A673 (cell line): ENCODE measurements at regions of chr19 and their contacts with region 1.

Region 1: DNA sequence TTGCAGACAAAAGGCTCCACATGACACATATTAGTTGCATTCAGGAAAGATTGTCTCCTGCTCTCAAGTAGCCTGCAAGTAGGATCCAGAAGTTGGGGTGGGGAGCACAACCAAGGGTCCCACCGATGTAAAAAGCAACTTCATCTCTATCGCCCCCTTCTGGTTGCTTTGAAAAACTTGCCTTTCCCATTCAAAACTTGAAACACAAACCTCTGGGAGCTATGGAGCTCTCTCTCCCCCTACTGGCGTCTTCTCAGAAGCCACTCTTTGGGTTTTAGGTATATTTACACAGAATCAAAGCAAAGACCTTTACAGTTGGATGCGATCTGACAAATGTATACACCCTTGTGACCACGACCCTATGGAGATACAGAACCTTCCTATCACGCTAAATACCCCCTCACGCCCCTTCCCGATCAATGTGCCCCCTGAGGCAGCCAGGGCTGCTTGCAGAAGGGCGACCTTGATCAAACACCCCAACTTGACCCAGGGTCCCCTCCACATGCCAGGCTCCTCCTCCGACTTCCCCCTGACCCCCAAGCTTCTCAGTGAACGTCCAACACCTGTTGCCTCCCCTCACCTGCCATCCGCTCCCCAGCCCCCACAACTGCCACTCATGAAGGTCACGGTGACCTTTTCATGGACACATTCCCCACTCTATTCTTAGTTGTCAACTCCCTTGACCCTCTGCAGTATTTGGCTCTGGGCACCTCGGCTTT is 10.1 kb downstream of the NOSIP start:
- DNase-seq: peak; percentile 94
- H3K4me3 ChIP-seq: peak overlapping the region; percentile 2
- H3K27ac ChIP-seq: peak overlapping the region; percentile 72
- H3K4me1 ChIP-seq: peaks cover 25% of the 10 kb centered on the region
- H3K27me3 ChIP-seq: no peaks in the 10 kb centered on the region
- CTCF ChIP-seq: peak; percentile 98

Region 2: DNA sequence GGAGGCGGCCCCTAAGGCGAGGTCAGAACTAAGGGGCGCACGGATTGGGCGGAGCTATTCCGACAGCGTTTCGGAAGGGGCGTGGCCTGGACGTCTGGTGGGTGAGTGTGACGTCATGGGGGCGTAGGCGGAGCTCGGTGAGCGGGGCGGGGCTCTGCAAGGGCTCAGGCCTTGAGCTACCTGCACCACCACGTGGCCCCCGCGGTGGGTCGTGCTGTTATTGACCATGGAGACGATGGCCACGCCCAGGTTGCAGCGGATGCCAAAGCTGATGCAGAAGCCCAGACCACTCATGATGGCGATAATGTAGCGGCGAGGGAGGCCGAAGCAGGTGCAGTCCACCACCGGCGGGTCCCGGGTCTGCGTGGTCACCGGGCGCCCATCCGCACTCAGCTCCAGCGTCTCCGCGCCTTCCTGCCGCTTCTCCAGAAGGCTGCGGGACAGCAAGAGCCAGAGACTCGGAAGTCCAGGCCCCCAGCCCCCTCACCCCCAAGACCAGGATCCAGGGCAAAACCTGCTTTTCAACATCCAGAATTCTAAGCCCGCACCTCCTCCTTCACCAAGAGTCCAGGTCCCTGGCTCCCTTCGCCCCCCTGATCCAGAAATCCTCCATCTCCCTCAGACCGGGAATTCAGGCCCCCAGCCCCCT is 133.8 kb before region 1 on chr19:
- CTCF ChIA-PET with region 1: no interaction called
- POLR2A ChIA-PET with region 1: no interaction called
- intact Hi-C with region 1: no loop called
- DNase-seq: no peak
- H3K4me3 ChIP-seq: no peak overlapping the region
- H3K27ac ChIP-seq: no peak overlapping the region
- H3K4me1 ChIP-seq: peaks cover 1% of the 10 kb centered on the region
- H3K27me3 ChIP-seq: peaks cover 36% of the 10 kb centered on the region
- CTCF ChIP-seq: no peak

Region 3: GRCh38 chr19:49502866-49503581 is 67.3 kb before region 1 on chr19:
- CTCF ChIA-PET with region 1: interaction called, 12 read pairs
- POLR2A ChIA-PET with region 1: no interaction called
- intact Hi-C with region 1: loop called (anchors 2 kb)
- DNase-seq: peak; percentile 90
- H3K4me3 ChIP-seq: no peak overlapping the region
- H3K27ac ChIP-seq: peak overlapping the region; percentile 18
- H3K4me1 ChIP-seq: peaks cover 44% of the 10 kb centered on the region
- H3K27me3 ChIP-seq: no peaks in the 10 kb centered on the region
- CTCF ChIP-seq: peak; percentile 71

Region 4: DNA sequence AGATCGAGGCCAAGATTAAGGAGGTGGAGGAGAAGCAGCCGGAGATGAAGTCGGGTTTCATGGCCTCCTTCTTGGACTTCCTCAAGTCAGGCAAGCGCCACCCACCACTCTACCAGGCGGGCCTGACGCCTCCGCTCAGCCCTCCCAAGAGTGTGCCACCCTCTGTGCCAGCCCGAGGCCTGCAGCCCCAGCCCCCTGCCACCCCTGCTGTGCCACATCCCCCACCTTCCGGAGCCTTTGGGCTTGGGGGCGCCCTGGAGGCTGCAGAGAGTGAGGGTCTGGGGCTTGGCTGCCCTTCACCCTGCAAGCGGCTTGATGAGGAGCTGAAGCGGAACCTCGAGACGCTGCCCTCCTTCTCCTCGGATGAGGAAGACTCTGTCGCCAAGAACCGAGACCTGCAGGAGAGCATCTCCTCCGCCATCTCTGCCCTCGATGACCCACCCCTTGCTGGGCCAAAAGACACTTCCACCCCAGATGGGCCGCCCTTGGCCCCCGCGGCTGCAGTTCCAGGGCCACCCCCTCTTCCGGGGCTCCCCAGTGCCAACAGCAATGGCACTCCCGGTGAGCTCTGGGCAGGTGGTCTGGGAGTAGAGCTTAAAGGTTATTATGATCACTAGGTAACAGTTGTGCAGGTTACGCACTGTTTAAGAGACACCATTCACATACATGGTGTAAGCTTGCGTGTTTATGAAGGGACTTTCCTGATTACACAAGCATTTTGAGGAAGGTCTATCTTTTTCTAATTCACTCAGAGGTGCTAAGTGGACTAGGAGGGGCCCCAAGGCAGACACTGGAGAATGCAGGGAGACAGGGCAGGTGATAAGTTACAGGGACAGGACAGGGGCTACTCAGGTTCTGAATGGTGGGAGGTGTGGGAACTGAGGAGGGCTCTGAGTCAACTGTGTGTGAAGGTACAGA is 29.3 kb after region 1 on chr19:
- CTCF ChIA-PET with region 1: no interaction called
- POLR2A ChIA-PET with region 1: no interaction called
- intact Hi-C with region 1: no loop called
- DNase-seq: no peak
- H3K4me3 ChIP-seq: no peak overlapping the region
- H3K27ac ChIP-seq: no peak overlapping the region
- H3K4me1 ChIP-seq: no peaks in the 10 kb centered on the region
- H3K27me3 ChIP-seq: no peaks in the 10 kb centered on the region
- CTCF ChIP-seq: no peak

Region 5: DNA sequence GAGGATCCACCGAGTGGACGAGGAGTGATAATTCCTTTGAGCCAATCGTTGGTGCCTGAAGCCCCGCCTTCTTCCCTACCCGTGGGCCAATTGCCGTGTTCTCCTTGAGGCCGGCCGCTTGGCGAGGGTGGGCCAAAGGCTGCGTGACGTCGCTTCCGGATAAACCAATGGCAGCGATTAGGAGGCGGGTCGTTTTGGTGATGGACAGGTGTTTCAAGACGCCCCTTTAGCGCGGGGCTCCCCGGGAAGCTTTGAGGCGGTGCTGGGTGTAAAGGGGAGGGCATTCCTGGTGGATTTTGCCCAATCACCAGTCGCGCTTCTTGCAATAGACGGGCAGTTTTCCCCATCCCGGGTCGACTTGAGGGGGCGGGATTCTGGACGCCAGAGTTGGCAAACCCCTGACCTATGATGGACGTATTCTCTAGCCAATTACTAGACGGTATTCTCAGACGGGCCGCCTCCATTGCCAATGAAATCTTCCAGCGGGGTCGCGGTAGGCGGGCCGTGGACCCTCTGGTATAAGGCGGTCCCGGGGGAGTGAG is 106.5 kb after region 1 on chr19:
- CTCF ChIA-PET with region 1: interaction called, 3 read pairs
- POLR2A ChIA-PET with region 1: no interaction called
- intact Hi-C with region 1: loop called (anchors 5 kb)
- DNase-seq: peak; percentile 100
- H3K4me3 ChIP-seq: peak overlapping the region; percentile 81
- H3K27ac ChIP-seq: peak overlapping the region; percentile 98
- H3K4me1 ChIP-seq: peaks cover 37% of the 10 kb centered on the region
- H3K27me3 ChIP-seq: no peaks in the 10 kb centered on the region
- CTCF ChIP-seq: no peak